Cardiac septum (tissue), 1 donor: ENCODE measurements at regions of chr3 and their contacts with region 1.

Region 1: GRCh38 chr3:98039322-98040024 is 4.4 kb upstream of the GABRR3 start:
- DNase-seq: no peak

Region 2: DNA sequence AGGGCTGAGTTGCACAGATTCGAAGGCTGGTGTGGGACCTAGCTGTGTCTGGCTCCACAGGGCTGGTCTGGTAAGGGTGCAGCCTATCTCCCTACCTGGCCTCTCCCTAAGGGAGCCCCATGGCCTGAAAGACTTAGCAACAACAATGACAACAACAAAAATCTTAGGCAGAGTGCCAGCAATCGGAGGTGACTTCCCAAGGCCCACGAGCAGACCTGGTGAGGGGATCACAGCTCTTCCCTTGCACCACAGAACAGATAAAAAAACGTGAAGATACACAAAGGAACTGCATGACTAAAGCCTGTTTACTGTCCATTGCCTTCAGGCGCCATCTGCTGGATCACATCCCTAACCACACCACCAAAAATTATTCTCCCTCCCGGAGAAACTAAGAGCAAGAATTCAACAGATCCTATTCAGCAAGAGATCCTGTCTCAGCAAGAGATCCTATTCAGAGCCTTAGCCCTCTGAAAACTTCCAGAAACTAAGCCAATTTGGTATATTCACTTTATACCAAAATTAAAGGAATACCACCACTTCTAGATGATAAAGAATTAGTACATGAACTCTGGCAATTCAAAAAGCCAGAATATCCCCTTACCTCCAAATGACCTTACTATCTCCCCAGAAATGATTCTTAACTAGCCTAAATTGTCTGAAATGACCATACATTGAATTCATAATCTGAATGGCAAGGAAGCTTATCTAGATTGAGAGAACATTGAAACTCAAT is 290.1 kb after region 1 on chr3:
- intact Hi-C with region 1: loop called (anchors 2 kb)
- DNase-seq: no peak